ENCODE measurements at regions of chr1 and their contacts with region 1.

Region 1: GRCh38 chr1:101945884-101946283 is 50.8 kb downstream of the OLFM3 start:
- DNase-seq: no peak
- H3K4me3 ChIP-seq: no peak overlapping the region
- H3K27ac ChIP-seq: no peak overlapping the region
- H3K4me1 ChIP-seq: no peaks in the 10 kb centered on the region
- H3K27me3 ChIP-seq: no peaks in the 10 kb centered on the region
- CTCF ChIP-seq: no peak
- POLR2A ChIP-seq: no peak

Region 2: DNA sequence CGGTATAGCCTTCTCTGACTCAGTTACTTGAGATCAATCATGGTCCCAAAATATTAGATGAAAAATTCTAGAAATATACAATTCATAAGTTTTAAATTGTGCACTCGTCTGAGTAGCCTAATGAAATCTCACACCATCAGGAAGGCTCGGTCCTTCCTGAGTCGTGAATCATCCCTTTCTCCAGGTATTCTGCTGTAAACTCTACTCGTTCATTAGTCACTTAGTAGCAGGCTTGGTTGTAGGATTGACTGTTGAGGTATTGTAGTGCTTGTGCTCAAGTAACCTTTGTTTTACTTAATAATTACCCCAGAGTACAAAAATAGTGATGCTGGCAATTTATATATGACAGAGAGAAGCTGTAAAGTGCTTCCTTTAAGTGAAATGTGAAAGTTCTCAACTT is 187.9 kb before region 1 on chr1:
- intact Hi-C with region 1: no loop called
- DNase-seq: no peak
- H3K4me3 ChIP-seq: no peak overlapping the region
- H3K27ac ChIP-seq: no peak overlapping the region
- H3K4me1 ChIP-seq: no peaks in the 10 kb centered on the region
- H3K27me3 ChIP-seq: no peaks in the 10 kb centered on the region
- CTCF ChIP-seq: no peak
- POLR2A ChIP-seq: no peak

Region 3: GRCh38 chr1:101873672-101874071 is 72.2 kb before region 1 on chr1:
- intact Hi-C with region 1: loop called (anchors 2 kb)
- DNase-seq: no peak
- H3K4me3 ChIP-seq: no peak overlapping the region
- H3K27ac ChIP-seq: no peak overlapping the region
- H3K4me1 ChIP-seq: no peaks in the 10 kb centered on the region
- H3K27me3 ChIP-seq: no peaks in the 10 kb centered on the region
- CTCF ChIP-seq: no peak
- POLR2A ChIP-seq: no peak